ENCODE measurements at regions of chr19 and their contacts with region 1.

Region 1: DNA sequence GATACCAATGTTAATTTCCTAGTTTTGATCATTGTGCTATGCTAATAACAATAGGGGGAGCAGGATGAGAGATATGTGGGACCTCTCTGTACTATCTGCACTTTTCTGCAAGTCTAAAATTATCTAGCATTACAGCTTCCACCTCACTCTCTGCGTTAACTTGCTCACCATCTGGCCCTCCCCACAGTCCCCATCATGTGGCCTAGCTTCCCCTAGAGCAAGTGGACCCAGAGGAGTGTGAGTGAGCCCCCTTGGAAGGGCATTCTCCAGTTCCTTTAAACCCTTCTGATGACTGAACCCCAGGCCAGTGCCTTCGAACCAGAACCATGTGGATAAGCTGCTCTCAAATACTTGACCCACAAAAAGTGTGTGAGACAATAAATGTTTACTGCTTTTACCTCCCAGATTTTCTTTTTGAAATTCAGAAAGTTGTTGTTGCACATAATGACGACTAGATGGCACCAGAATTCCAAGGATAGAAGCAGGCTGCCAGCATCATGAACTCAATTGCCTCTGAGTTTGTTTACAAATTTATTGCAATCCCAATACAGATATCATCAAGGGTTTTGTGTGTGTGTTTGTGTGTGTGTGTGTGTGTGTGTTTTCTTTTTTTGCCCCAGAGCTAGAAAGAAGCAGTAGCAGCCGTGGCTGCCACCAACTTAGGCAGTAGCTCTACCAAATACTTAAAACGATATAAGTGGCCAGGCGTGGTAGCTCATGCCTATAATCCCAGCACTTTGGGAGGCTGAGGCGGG is 49.0 kb upstream of the ZNF780A start:
- DNase-seq: peak; percentile 63
- ATAC-seq: peak; percentile 77
- H3K4me3 ChIP-seq: no peak overlapping the region
- H3K27ac ChIP-seq: no peak overlapping the region
- H3K4me1 ChIP-seq: no peaks in the 10 kb centered on the region
- H3K27me3 ChIP-seq: peaks cover 10% of the 10 kb centered on the region
- CTCF ChIP-seq: peak; percentile 93
- POLR2A ChIP-seq: peak; percentile 28; the same call in 1 of the 2 replicates
- RAD21 ChIP-seq: peak; percentile 94

Region 2: GRCh38 chr19:39889872-39890545 is 249.7 kb before region 1 on chr19:
- CTCF ChIA-PET with region 1: no interaction called
- POLR2A ChIA-PET with region 1: no interaction called
- dilution Hi-C with region 1: no loop called
- in situ Hi-C with region 1: no loop called
- intact Hi-C with region 1: no loop called
- DNase-seq: no peak
- ATAC-seq: no peak
- H3K4me3 ChIP-seq: no peak overlapping the region
- H3K27ac ChIP-seq: no peak overlapping the region
- H3K4me1 ChIP-seq: no peaks in the 10 kb centered on the region
- H3K27me3 ChIP-seq: peaks cover 9% of the 10 kb centered on the region
- CTCF ChIP-seq: no peak
- POLR2A ChIP-seq: no peak
- RAD21 ChIP-seq: no peak

Region 3: DNA sequence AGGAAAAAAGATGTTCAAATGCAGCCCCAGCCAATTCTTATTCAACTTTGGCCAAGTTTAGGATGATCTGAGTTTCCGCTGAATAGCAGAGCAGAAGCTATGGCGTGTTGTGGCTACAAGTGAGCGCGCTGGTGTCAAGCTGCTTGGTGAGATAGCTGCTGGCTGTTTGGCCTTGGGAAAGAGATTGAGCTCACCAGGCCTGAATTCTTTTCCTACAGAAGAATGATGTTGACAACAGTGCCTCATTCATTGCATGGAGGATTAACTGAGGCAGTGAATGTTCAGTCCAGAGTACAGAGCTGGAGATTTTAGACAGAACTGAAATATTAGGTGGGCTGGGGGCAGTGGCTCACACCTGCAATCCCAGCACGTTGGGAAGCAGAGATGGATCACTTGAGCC is 20.0 kb after region 1 on chr19:
- CTCF ChIA-PET with region 1: no interaction called
- POLR2A ChIA-PET with region 1: no interaction called
- dilution Hi-C with region 1: no loop called
- in situ Hi-C with region 1: no loop called
- intact Hi-C with region 1: no loop called
- DNase-seq: no peak
- ATAC-seq: no peak
- H3K4me3 ChIP-seq: no peak overlapping the region
- H3K27ac ChIP-seq: no peak overlapping the region
- H3K4me1 ChIP-seq: no peaks in the 10 kb centered on the region
- H3K27me3 ChIP-seq: no peaks in the 10 kb centered on the region
- CTCF ChIP-seq: no peak
- POLR2A ChIP-seq: no peak
- RAD21 ChIP-seq: no peak

Region 4: DNA sequence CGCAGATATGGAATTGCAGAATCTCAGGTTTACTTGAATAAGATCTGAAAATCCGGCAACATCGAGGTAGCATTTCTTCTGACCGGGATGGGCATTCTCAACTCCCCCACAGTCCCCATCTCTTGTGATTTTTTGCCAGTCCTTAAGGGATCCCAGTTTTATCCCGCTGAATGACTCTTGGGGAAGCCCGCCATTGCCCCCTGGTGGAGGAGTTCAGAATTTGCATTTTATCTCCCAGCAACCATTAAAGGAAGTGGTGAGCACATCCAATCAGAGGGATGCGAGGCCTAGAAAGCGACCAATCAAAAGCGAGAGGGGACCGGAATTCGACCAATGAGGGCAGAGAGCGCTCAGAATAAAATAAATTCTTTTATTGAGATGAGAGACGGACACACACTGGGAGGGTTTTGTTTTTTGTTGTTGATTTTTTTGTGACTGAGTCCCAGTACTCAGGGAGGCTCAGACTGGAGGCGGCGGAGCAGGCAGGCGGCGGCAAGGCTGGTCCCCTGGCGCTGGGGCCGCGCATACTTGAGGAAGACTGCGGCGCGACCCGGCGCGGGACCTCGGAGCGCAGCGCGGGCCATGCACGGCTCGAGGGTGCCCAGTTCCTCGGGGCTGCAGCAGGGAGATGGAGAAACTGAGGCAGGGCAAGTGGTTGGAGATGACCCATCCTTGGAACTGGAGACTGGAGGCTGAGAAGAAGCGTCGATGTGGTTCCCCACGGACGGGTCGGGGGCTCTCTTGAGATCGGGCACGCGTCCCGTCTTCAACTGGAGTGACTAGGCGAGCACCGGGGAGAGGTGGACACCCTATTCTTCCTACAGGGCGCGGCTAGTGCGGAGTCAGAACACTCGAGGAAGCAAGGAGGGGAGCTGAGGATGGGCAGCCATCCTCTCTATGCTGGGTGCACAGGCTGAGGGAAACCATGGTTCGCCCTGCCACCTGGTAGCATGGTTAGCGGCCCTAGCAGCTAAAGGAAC is 82.4 kb after region 1 on chr19:
- CTCF ChIA-PET with region 1: interaction called, 3 read pairs
- POLR2A ChIA-PET with region 1: no interaction called
- dilution Hi-C with region 1: no loop called
- in situ Hi-C with region 1: loop called (anchors 5 kb)
- intact Hi-C with region 1: loop called (anchors 1 kb)
- DNase-seq: peak; percentile 90
- ATAC-seq: peak; percentile 69
- H3K4me3 ChIP-seq: no peak overlapping the region
- H3K27ac ChIP-seq: no peak overlapping the region
- H3K4me1 ChIP-seq: peaks cover 5% of the 10 kb centered on the region; the same call in 1 of the 2 replicates
- H3K27me3 ChIP-seq: peaks cover 3% of the 10 kb centered on the region
- CTCF ChIP-seq: peak; percentile 95
- POLR2A ChIP-seq: no peak
- RAD21 ChIP-seq: peak; percentile 87

Region 5: GRCh38 chr19:40285353-40286234 is 145.9 kb after region 1 on chr19:
- CTCF ChIA-PET with region 1: no interaction called
- POLR2A ChIA-PET with region 1: interaction called, 18 read pairs
- dilution Hi-C with region 1: no loop called
- in situ Hi-C with region 1: no loop called
- intact Hi-C with region 1: no loop called
- DNase-seq: peak; percentile 99
- ATAC-seq: peak; percentile 93
- H3K4me3 ChIP-seq: peak overlapping the region; percentile 96
- H3K27ac ChIP-seq: peak overlapping the region; percentile 91
- H3K4me1 ChIP-seq: peaks cover 17% of the 10 kb centered on the region
- H3K27me3 ChIP-seq: no peaks in the 10 kb centered on the region
- CTCF ChIP-seq: no peak
- POLR2A ChIP-seq: peak; percentile 64; the same call in 1 of the 2 replicates
- RAD21 ChIP-seq: no peak

Region 6: DNA sequence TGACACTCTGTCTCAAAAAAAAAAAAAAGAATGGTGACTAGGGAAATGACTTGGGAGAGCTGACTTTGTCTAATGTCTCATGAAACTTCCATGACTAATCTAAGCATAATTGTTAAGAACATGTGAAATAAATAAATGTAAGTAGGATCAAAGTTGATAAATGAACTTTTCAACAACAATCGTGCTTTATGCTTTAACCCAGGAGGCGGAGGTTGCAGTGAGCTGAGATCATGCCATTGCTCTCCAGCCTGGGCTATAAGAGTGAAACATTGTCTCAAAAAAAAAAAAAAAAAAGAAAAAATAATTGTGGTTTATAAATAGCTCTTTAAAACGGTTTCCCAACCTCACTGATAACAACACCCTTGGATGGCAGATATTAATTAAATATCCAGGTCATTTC is 158.3 kb after region 1 on chr19:
- CTCF ChIA-PET with region 1: no interaction called
- POLR2A ChIA-PET with region 1: no interaction called
- dilution Hi-C with region 1: no loop called
- in situ Hi-C with region 1: no loop called
- intact Hi-C with region 1: no loop called
- DNase-seq: no peak
- ATAC-seq: no peak
- H3K4me3 ChIP-seq: no peak overlapping the region
- H3K27ac ChIP-seq: no peak overlapping the region
- H3K4me1 ChIP-seq: no peaks in the 10 kb centered on the region
- H3K27me3 ChIP-seq: no peaks in the 10 kb centered on the region
- CTCF ChIP-seq: no peak
- POLR2A ChIP-seq: no peak
- RAD21 ChIP-seq: no peak

Region 7: DNA sequence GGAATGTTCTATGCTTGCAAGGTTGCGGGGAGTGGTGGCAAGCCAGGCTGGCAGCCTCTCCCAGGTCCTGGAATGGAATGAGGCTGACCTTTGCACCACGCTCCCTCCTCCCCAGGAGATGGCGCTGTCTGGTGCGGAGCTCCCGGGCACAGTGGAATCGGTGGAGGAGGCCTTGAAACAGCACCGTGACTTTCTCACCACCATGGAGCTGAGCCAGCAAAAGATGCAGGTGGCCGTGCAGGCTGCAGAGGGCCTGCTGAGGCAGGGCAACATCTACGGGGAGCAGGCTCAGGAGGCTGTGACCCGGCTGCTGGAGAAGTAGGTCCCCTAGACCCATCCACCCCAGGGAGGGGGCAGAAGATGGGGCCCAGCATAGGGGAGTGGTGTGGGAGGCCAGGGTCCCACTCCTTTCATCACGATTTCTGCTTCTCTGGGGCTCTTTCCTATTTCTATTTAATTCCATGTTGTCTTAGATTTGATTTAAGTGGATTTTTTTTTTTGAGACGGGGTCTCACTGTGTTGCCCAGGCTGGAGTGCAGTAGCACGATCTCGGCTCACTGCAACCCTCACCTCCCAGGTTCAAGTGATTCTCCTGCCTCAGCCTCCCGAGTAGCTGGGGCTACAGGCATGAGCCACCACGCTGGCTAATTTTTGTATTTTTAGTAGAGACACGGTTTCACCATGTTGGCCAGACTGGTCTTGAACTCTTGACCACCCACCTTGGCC is 383.8 kb after region 1 on chr19:
- CTCF ChIA-PET with region 1: no interaction called
- POLR2A ChIA-PET with region 1: no interaction called
- dilution Hi-C with region 1: no loop called
- in situ Hi-C with region 1: loop called (anchors 25 kb)
- intact Hi-C with region 1: no loop called
- DNase-seq: peak; percentile 44
- ATAC-seq: peak; percentile 85
- H3K4me3 ChIP-seq: no peak overlapping the region
- H3K27ac ChIP-seq: no peak overlapping the region
- H3K4me1 ChIP-seq: no peaks in the 10 kb centered on the region
- H3K27me3 ChIP-seq: peaks cover 18% of the 10 kb centered on the region; the same call in 1 of the 2 replicates
- CTCF ChIP-seq: peak; percentile 62
- POLR2A ChIP-seq: no peak
- RAD21 ChIP-seq: peak; percentile 49